ENCODE measurements at regions of chr14 and their contacts with region 1.

Region 1: DNA sequence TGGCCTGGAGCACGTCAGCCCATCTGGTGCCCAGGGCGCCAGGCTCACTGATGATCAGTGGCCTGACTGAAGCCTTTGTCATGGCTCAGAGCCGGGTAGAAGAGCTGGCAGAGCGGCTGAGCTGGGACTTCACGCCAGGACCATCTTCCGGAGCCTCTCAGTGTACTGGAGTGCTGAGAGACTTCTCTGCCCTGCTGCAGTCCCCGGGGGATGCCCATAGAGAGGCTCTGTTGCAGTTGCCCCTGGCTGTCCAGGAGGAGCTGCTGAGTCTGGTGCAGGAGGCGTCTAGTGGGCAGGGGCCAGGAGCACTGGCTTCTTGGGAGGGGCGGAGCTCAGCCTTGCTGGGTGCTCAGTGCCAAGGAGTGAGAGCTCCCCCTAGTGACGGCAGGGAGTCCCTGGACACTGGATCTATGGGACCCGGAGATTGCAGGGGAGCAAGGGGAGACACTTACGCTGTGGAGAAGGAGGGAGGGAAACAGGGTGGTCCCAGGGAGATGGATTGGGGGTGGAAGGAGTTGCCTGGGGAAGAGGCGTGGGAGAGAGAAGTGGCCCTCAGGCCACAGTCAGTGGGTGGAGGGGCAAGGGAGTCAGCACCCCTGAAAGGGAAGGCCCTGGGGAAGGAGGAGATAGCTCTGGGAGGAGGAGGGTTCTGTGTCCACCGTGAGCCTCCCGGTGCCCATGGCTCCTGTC is 2.0 kb downstream of the KHNYN start:
- DNase-seq: peak; percentile 93
- H3K4me3 Mint-ChIP-seq: peak overlapping the region; percentile 80
- H3K27ac Mint-ChIP-seq: peak overlapping the region; percentile 91
- H3K4me1 Mint-ChIP-seq: peaks cover 25% of the 10 kb centered on the region
- H3K27me3 Mint-ChIP-seq: no peaks in the 10 kb centered on the region
- CTCF ChIP-seq: peak; percentile 83

Region 2: DNA sequence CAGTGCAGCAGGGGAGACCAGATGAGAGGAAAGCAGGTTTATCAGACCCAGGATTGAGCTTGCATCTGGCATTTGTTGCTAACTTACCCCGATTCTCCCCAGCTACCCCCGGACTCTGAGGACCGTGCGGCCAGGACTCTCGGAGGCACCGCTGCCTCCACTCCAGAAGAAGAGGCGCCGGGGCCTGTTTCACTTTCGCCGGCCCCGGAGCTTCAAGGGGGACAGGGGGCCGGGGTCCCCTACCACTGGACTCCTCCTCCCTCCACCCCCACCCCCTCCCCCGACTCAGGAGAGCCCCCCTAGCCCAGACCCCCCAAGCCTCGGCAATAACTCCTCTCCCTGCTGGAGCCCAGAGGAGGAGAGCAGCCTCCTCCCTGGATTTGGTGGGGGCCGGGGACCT is 366.9 kb before region 1 on chr14:
- CTCF ChIA-PET with region 1: no interaction called
- POLR2A ChIA-PET with region 1: no interaction called
- intact Hi-C with region 1: no loop called
- DNase-seq: no peak
- H3K4me3 Mint-ChIP-seq: no peak overlapping the region
- H3K27ac Mint-ChIP-seq: no peak overlapping the region
- H3K4me1 Mint-ChIP-seq: no peaks in the 10 kb centered on the region
- H3K27me3 Mint-ChIP-seq: peaks cover 29% of the 10 kb centered on the region
- CTCF ChIP-seq: no peak

Region 3: DNA sequence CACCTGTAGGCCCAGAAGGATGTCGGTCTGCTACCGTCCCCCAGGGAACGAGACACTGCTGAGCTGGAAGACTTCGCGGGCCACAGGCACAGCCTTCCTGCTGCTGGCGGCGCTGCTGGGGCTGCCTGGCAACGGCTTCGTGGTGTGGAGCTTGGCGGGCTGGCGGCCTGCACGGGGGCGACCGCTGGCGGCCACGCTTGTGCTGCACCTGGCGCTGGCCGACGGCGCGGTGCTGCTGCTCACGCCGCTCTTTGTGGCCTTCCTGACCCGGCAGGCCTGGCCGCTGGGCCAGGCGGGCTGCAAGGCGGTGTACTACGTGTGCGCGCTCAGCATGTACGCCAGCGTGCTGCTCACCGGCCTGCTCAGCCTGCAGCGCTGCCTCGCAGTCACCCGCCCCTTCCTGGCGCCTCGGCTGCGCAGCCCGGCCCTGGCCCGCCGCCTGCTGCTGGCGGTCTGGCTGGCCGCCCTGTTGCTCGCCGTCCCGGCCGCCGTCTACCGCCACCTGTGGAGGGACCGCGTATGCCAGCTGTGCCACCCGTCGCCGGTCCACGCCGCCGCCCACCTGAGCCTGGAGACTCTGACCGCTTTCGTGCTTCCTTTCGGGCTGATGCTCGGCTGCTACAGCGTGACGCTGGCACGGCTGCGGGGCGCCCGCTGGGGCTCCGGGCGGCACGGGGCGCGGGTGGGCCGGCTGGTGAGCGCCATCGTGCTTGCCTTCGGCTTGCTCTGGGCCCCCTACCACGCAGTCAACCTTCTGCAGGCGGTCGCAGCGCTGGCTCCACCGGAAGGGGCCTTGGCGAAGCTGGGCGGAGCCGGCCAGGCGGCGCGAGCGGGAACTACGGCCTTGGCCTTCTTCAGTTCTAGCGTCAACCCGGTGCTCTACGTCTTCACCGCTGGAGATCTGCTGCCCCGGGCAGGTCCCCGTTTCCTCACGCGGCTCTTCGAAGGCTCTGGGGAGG is 120.8 kb before region 1 on chr14 and contains the start of gene LTB4R:
- CTCF ChIA-PET with region 1: interaction called, 135 read pairs
- POLR2A ChIA-PET with region 1: interaction called, 39 read pairs
- intact Hi-C with region 1: no loop called
- DNase-seq: peak; percentile 72
- H3K4me3 Mint-ChIP-seq: peak within 1 kb of the TSS; percentile 69
- H3K27ac Mint-ChIP-seq: no peak within 1 kb of the TSS
- H3K4me1 Mint-ChIP-seq: peaks cover 35% of the 10 kb centered on the region
- H3K27me3 Mint-ChIP-seq: no peaks in the 10 kb centered on the region
- CTCF ChIP-seq: peak; percentile 19
- total RNA-seq, gene LTB4R: 15.8 and 19.9 TPM in 2 replicates

Region 4: GRCh38 chr14:24332268-24332993 is 99.3 kb before region 1 on chr14:
- CTCF ChIA-PET with region 1: interaction called, 626 read pairs
- POLR2A ChIA-PET with region 1: interaction called, 52 read pairs
- intact Hi-C with region 1: loop called (anchors 1 kb)
- DNase-seq: peak; percentile 72
- H3K4me3 Mint-ChIP-seq: no peak overlapping the region
- H3K27ac Mint-ChIP-seq: no peak overlapping the region
- H3K4me1 Mint-ChIP-seq: peaks cover 7% of the 10 kb centered on the region
- H3K27me3 Mint-ChIP-seq: peaks cover 11% of the 10 kb centered on the region
- CTCF ChIP-seq: peak; percentile 60

Region 5: DNA sequence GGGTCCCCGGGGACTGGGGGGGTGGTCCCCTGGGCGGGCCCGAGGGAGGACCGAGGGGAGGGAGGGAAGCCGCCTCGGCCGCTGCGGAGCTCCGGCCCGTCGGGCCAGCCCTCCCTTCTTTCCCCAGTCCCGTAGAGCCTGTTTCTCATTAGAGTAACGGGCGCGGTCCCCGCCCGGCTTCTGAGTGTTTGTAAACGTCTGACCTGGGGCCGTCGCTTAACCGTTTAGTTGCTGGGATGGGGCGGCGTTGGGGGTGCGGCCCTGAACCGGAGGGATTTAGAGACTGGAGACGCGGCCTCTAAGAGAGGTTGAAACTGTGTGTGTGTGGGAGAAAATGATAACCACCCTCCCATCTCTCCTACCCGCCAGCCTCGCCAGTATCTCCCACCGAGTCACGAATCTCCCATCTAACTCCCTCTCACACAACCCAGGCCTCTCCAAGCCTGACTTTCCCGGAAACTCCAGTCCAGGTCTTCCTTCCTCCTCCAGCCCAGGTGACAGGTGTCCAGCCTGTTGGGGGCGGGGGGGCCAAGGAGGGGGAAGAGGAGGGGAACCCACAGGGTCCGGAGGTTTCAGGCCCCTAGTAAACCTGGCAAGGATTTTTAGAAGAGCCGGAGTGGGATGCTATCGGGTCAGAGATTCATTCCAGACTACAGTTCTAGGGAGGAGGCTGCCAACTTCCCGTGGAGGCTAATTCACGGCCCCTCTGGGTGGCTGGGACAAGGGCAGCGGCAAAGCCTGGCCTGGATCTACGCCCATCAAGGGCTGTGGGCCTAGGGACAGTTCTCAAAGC is 64.8 kb before region 1 on chr14:
- CTCF ChIA-PET with region 1: interaction called, 42 read pairs
- POLR2A ChIA-PET with region 1: interaction called, 26 read pairs
- intact Hi-C with region 1: loop called (anchors 1 kb)
- DNase-seq: peak; percentile 97
- H3K4me3 Mint-ChIP-seq: peak overlapping the region; percentile 75
- H3K27ac Mint-ChIP-seq: peak overlapping the region; percentile 96
- H3K4me1 Mint-ChIP-seq: peaks cover 24% of the 10 kb centered on the region
- H3K27me3 Mint-ChIP-seq: no peaks in the 10 kb centered on the region
- CTCF ChIP-seq: no peak

Region 6: GRCh38 chr14:24403294-24403998 is 28.3 kb before region 1 on chr14:
- CTCF ChIA-PET with region 1: interaction called, 19 read pairs
- POLR2A ChIA-PET with region 1: interaction called, 5 read pairs
- intact Hi-C with region 1: no loop called
- DNase-seq: no peak
- H3K4me3 Mint-ChIP-seq: no peak overlapping the region
- H3K27ac Mint-ChIP-seq: no peak overlapping the region
- H3K4me1 Mint-ChIP-seq: peaks cover 15% of the 10 kb centered on the region
- H3K27me3 Mint-ChIP-seq: no peaks in the 10 kb centered on the region
- CTCF ChIP-seq: no peak

Region 7: DNA sequence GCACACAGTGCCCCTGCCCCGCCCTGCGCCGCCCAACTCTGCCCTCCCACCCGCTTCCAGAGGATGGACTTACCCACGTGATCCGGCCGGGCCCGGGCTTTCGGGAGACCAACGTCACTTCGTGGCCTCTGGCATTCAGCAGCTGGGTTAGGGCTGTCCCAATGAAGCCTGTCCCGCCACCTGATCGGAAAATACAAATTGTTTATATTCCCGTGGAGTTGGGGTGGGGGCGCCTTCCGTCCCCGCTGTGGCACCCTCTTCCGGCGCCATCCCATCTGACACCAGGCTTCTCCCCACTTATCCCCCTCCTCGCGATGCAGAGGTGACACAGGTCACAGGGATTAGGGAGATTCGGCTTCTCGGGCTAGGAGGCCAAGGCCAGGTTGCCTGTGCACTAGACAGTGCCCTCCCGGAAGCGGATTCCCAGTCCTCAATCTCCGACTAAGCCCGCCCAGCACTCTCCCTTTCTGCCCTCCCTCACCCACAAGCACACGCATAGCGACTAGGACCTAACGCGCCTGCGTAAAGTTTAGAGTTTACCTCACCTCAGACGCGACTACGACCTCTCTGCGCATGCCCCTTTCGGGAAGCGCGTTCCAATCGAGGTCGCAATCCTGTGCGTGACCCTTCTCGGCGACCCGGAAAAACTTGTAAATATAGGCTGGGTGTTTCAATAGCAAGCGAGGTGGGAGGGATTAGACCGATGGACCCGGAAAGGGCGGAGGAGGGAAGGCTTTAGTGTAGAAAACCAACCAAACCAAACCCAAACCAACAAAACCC is 10.7 kb after region 1 on chr14 and contains the start of gene SDR39U1:
- CTCF ChIA-PET with region 1: interaction called, 40 read pairs
- POLR2A ChIA-PET with region 1: interaction called, 47 read pairs
- intact Hi-C with region 1: no loop called
- DNase-seq: peak; percentile 99
- H3K4me3 Mint-ChIP-seq: peak within 1 kb of the TSS; percentile 78
- H3K27ac Mint-ChIP-seq: peak within 1 kb of the TSS; percentile 100
- H3K4me1 Mint-ChIP-seq: peaks cover 8% of the 10 kb centered on the region
- H3K27me3 Mint-ChIP-seq: no peaks in the 10 kb centered on the region
- CTCF ChIP-seq: no peak
- total RNA-seq, gene SDR39U1: 53.2 and 58.7 TPM in 2 replicates

Region 8: DNA sequence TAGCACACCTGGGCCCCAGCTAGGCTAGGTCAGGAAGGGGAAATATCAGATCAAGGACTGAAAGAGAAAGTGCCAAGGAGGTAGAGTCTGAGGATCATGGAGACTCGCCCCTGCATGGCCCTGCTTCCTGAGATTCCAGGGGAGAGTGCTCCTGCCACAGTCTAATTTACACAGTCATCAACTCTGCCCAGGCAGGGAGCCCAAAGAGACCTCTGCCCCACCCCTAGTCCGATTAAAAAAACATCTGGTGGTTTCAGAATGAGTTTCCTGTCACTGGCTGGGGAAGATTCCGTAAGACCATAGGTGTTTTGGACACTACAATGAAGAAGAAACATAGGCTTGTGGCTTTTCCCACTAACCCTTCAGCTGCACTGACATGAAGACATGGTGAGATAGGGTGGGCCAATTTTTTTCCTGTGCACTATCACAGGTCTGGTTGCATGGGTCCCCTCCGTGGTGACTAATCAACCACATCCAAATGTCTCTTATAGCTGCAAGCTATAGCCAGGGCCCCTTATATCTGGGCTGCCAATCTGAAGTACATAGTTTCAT is 233.8 kb after region 1 on chr14:
- CTCF ChIA-PET with region 1: no interaction called
- POLR2A ChIA-PET with region 1: no interaction called
- intact Hi-C with region 1: no loop called
- DNase-seq: no peak
- H3K4me3 Mint-ChIP-seq: no peak overlapping the region
- H3K27ac Mint-ChIP-seq: no peak overlapping the region
- H3K4me1 Mint-ChIP-seq: peaks cover 6% of the 10 kb centered on the region
- H3K27me3 Mint-ChIP-seq: peaks cover 20% of the 10 kb centered on the region
- CTCF ChIP-seq: no peak

Measured in MCF 10A (cell line).